PC-9 (cell line): ENCODE measurements at regions of chr6 and their contacts with region 1.

Region 1: DNA sequence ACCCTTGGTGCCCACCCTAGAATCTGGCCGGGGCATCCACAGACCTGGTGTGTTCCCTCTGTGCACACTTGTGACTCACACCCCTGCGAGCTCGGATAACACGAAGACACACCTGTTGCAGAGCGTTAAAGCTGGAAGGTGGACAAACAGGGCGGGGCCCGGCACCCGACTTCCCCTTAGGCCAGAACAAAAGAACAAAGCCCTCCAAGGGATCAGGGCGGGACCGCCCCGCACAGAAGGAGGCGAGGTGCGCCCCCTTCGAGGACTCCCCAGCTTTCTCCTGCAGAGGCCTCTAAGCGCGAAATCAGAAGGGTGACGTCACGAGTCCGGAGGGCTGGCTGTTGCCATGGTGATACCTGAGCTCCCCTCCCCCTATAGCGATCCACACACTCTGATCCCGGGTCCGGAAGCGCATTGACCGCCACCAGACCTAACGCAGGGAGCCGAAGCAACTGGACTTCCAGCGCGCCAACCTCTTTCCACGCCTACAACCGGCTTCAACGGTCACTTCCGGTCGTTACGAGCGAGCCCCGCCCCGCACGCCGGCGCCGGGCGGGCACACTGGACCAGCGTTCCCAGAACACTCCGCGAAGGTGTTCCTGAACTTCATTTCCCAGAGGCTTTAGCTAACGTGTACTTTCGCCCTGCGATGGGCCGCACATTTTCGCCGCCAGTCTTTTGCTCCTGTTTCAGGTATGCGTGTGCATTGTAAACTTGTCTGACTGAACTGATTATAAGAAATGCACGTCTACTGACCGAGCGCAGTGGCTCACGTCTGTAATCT is at the start of gene ZNF184:
- DNase-seq: peak; percentile 94 to 98
- H3K4me3 ChIP-seq: peak within 1 kb of the TSS; percentile 91
- H3K27ac ChIP-seq: peak within 1 kb of the TSS; percentile 79
- H3K4me1 ChIP-seq: peaks cover 12% of the 10 kb centered on the region; the same call in 1 of the 2 replicates
- H3K27me3 ChIP-seq: no peaks in the 10 kb centered on the region
- CTCF ChIP-seq: peak; percentile 19; the same call in 1 of the 2 replicates
- total RNA-seq, gene ZNF184: 7.0 and 8.8 TPM in 2 replicates

Region 2: GRCh38 chr6:27177485-27178406 is 295.1 kb before region 1 on chr6:
- CTCF ChIA-PET with region 1: interaction called, 6 read pairs
- POLR2A ChIA-PET with region 1: interaction called, 20 read pairs
- intact Hi-C with region 1: no loop called
- DNase-seq: peak; percentile 80 to 88
- H3K4me3 ChIP-seq: peak overlapping the region; percentile 97
- H3K27ac ChIP-seq: peak overlapping the region; percentile 67
- H3K4me1 ChIP-seq: no peaks in the 10 kb centered on the region; the same call in 1 of the 2 replicates
- H3K27me3 ChIP-seq: no peaks in the 10 kb centered on the region
- CTCF ChIP-seq: peak; percentile 67

Region 3: GRCh38 chr6:27312146-27312949 is 160.5 kb before region 1 on chr6 and contains the start of gene POM121L2:
- CTCF ChIA-PET with region 1: no interaction called
- POLR2A ChIA-PET with region 1: no interaction called
- intact Hi-C with region 1: loop called (anchors 2 kb)
- DNase-seq: peak; percentile 64 to 87
- H3K4me3 ChIP-seq: peak within 1 kb of the TSS; percentile 68
- H3K27ac ChIP-seq: no peak within 1 kb of the TSS
- H3K4me1 ChIP-seq: no peaks in the 10 kb centered on the region
- H3K27me3 ChIP-seq: 0 out of 2 replicates have a peak, but pooled peaks cover 3% of the 10 kb centered on the region
- CTCF ChIP-seq: peak; percentile 79
- total RNA-seq, gene POM121L2: 0.26 TPM in 1 of 2 replicates, not detected in the other

Region 4: GRCh38 chr6:27392481-27393022 is 80.3 kb before region 1 on chr6:
- CTCF ChIA-PET with region 1: no interaction called
- POLR2A ChIA-PET with region 1: no interaction called
- intact Hi-C with region 1: no loop called
- DNase-seq: no peak
- H3K4me3 ChIP-seq: no peak overlapping the region
- H3K27ac ChIP-seq: no peak overlapping the region
- H3K4me1 ChIP-seq: peaks cover 6% of the 10 kb centered on the region; the same call in 1 of the 2 replicates
- H3K27me3 ChIP-seq: no peaks in the 10 kb centered on the region
- CTCF ChIP-seq: no peak

Region 5: GRCh38 chr6:27503436-27504030 is 30.7 kb after region 1 on chr6:
- CTCF ChIA-PET with region 1: interaction called, 12 read pairs
- POLR2A ChIA-PET with region 1: no interaction called
- intact Hi-C with region 1: no loop called
- DNase-seq: peak; percentile 66 to 75
- H3K4me3 ChIP-seq: peak overlapping the region; percentile 73
- H3K27ac ChIP-seq: peak overlapping the region; percentile 57
- H3K4me1 ChIP-seq: peaks cover 26% of the 10 kb centered on the region
- H3K27me3 ChIP-seq: no peaks in the 10 kb centered on the region
- CTCF ChIP-seq: no peak

Region 6: GRCh38 chr6:27518881-27519795 is 46.3 kb after region 1 on chr6:
- CTCF ChIA-PET with region 1: no interaction called
- POLR2A ChIA-PET with region 1: no interaction called
- intact Hi-C with region 1: no loop called
- DNase-seq: peak; percentile 72 to 85
- H3K4me3 ChIP-seq: peak overlapping the region; percentile 87
- H3K27ac ChIP-seq: peak overlapping the region; percentile 50
- H3K4me1 ChIP-seq: peaks cover 19% of the 10 kb centered on the region
- H3K27me3 ChIP-seq: no peaks in the 10 kb centered on the region
- CTCF ChIP-seq: peak; percentile 86